ENCODE measurements at regions of chr7 and their contacts with region 1.

Region 1: DNA sequence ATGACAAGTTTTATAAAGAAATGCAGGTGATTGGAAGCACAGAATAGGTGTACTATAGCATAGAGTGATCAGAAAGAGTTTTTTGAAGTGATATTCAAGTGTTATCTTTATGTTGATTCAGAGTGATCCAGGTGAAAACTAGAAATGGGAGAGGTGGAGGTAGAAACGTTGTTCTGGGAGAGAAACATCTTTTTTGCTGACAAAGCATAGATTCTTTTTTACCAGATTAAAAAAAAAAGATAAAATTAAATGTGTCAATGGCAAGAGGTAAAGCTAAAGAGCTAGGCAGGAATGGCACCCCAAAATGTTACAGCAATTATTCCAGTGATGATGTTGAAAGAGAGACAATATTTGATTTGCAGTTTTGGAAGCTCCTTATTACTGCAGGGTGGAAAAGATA is 12.6 kb upstream of the VSTM2A start:
- DNase-seq: no peak
- H3K4me3 ChIP-seq: no peak overlapping the region
- H3K27ac ChIP-seq: no peak overlapping the region
- H3K4me1 ChIP-seq: no peaks in the 10 kb centered on the region
- H3K27me3 ChIP-seq: peaks cover 7% of the 10 kb centered on the region
- CTCF ChIP-seq: no peak

Region 2: GRCh38 chr7:54477083-54477482 is 52.5 kb before region 1 on chr7:
- CTCF ChIA-PET with region 1: no interaction called
- POLR2A ChIA-PET with region 1: no interaction called
- intact Hi-C with region 1: loop called (anchors 5 kb)
- DNase-seq: no peak
- H3K4me3 ChIP-seq: no peak overlapping the region
- H3K27ac ChIP-seq: no peak overlapping the region
- H3K4me1 ChIP-seq: no peaks in the 10 kb centered on the region
- H3K27me3 ChIP-seq: peaks cover 50% of the 10 kb centered on the region
- CTCF ChIP-seq: peak; percentile 65

Region 3: GRCh38 chr7:54581511-54581910 is 51.9 kb after region 1 on chr7:
- CTCF ChIA-PET with region 1: no interaction called
- POLR2A ChIA-PET with region 1: no interaction called
- intact Hi-C with region 1: loop called (anchors 10 kb)
- DNase-seq: no peak
- H3K4me3 ChIP-seq: no peak overlapping the region
- H3K27ac ChIP-seq: no peak overlapping the region
- H3K4me1 ChIP-seq: no peaks in the 10 kb centered on the region
- H3K27me3 ChIP-seq: no peaks in the 10 kb centered on the region
- CTCF ChIP-seq: no peak

Region 4: DNA sequence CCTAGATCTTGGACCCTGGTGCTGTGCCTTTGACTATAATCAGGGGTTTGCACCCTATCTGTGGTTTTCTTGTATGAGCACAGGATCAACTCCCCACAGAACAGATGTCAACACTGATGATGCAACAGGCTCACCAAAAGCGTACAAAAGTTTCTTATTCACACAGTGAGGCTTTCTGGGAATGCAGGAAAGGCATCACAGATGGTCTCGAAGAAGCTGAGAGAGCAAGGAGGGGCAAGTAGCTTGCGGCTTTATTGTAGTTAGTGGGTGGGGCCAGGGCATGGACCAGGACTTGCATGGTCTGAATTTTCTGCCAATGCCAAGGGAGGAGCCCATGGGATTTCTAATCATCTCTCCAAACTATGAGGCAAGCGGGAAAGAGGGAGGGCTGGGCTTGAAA is 183.3 kb after region 1 on chr7:
- CTCF ChIA-PET with region 1: no interaction called
- POLR2A ChIA-PET with region 1: no interaction called
- intact Hi-C with region 1: no loop called
- DNase-seq: no peak
- H3K4me3 ChIP-seq: no peak overlapping the region
- H3K27ac ChIP-seq: no peak overlapping the region
- H3K4me1 ChIP-seq: no peaks in the 10 kb centered on the region
- H3K27me3 ChIP-seq: peaks cover 31% of the 10 kb centered on the region
- CTCF ChIP-seq: no peak

Region 5: DNA sequence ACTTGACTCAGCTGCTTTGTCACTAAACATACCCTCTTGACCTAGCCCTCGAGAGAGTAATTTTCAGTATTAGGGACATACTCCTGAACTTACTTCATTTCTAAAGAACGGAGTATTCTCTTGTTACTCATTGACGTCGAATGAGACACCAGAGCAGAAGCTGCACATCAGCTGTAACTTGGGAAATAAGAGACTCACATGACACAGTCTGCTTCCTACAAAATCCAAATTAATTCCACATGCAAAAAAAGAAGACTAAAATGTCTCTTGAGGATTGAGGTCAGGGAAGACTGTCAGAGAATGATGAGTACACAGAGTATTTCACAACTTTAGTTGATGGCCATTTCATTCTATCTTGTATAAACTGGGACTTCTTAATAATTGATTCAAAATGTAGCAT is 374.6 kb after region 1 on chr7:
- CTCF ChIA-PET with region 1: no interaction called
- POLR2A ChIA-PET with region 1: no interaction called
- intact Hi-C with region 1: no loop called
- DNase-seq: no peak
- H3K4me3 ChIP-seq: no peak overlapping the region
- H3K27ac ChIP-seq: no peak overlapping the region
- H3K4me1 ChIP-seq: no peaks in the 10 kb centered on the region
- H3K27me3 ChIP-seq: no peaks in the 10 kb centered on the region
- CTCF ChIP-seq: no peak

Measured in PC-9 (cell line).